ENCODE measurements at regions of chr19 and their contacts with region 1.

Region 1: GRCh38 chr19:31804668-31805067 is 455.4 kb upstream of the TSHZ3 start:
- DNase-seq: no peak
- H3K4me3 ChIP-seq: no peak overlapping the region
- CTCF ChIP-seq: no peak

Region 2: DNA sequence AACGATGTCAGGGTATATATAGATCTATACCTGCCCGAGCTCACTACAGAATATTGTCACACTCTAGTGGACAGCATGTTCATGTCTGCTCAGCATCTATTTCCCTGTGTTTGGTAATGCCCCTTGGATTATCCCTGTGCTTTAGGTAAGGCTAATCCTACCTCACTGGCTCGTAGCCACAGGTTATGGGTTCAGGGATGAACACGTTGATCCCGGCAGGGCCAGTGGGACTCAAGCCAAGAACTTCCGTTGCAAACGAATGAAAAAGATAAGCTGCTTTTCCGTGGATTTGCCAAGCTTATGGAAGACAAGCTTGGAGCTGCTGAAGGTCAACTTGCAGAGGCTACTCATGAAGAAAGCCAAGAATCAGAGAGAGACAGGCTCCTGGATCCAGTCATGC is 55.4 kb before region 1 on chr19:
- in situ Hi-C with region 1: loop called (anchors 5 kb)
- DNase-seq: no peak
- H3K4me3 ChIP-seq: no peak overlapping the region
- CTCF ChIP-seq: no peak

Region 3: DNA sequence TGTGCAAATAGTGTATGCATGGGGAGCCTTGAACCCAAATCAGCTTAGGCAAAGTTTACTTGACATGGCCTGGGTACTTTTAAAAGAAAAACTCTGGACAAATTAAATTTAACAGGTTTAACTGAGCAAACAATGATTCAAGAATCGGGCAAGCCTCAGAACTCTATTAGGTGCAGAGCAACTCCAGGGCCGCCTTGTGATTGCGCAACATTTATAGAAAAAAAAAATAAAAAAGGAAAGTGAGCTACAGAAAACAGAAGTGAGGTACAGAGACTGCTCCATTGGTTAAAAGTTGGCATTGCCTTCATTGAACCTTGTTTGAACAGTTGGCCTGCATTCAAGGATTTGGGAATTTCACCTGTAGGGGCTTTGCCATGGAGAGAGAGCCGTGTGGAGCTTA is 34.4 kb before region 1 on chr19:
- in situ Hi-C with region 1: no loop called
- DNase-seq: no peak
- H3K4me3 ChIP-seq: no peak overlapping the region
- CTCF ChIP-seq: no peak

Region 4: GRCh38 chr19:31863122-31863521 is 58.5 kb after region 1 on chr19:
- in situ Hi-C with region 1: loop called (anchors 5 kb)
- DNase-seq: no peak
- H3K4me3 ChIP-seq: no peak overlapping the region
- CTCF ChIP-seq: no peak

Region 5: DNA sequence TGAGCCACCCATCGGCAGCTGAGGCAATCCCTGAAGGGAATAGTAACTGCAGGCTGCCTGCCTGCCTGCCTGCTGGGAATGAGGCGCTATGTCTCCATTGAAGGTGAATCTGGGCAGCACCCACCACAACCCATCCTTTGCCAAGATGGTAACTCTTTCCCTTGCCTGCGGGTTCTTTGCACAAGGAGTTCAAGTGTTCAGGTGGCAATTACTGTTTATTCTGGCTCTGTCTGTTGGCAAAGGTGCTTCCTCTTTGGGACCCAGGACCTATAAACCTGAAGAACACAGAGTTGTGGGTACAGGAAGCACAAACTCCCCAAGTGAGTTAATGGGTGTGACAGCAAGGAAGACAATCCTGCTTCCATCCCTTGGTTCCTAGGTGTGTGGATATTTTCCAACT is 92.6 kb after region 1 on chr19:
- in situ Hi-C with region 1: no loop called
- DNase-seq: no peak
- H3K4me3 ChIP-seq: no peak overlapping the region
- CTCF ChIP-seq: no peak

Measured in astrocyte of the cerebellum (primary cell).